K562 (cell line): ENCODE measurements at regions of chr5 and their contacts with region 1.

Region 1: GRCh38 chr5:38666668-38667498 is 110.4 kb upstream of the LIFR start:
- DNase-seq: peak; percentile 57 to 64 (median 58)
- ATAC-seq: peak; percentile 97
- H3K4me3 ChIP-seq: no peak overlapping the region
- H3K27ac ChIP-seq: no peak overlapping the region
- H3K4me1 ChIP-seq: no peaks in the 10 kb centered on the region
- H3K27me3 ChIP-seq: 0 out of 5 replicates have a peak, but pooled peaks cover 0 to 6% of the 10 kb centered on the region in 2 experiments
- CTCF ChIP-seq: peak; percentile 79 to 82 (median 80)
- EP300 ChIP-seq: no peak
- POLR2A ChIP-seq: no peak
- RAD21 ChIP-seq: peak; percentile 86 to 89

Region 2: DNA sequence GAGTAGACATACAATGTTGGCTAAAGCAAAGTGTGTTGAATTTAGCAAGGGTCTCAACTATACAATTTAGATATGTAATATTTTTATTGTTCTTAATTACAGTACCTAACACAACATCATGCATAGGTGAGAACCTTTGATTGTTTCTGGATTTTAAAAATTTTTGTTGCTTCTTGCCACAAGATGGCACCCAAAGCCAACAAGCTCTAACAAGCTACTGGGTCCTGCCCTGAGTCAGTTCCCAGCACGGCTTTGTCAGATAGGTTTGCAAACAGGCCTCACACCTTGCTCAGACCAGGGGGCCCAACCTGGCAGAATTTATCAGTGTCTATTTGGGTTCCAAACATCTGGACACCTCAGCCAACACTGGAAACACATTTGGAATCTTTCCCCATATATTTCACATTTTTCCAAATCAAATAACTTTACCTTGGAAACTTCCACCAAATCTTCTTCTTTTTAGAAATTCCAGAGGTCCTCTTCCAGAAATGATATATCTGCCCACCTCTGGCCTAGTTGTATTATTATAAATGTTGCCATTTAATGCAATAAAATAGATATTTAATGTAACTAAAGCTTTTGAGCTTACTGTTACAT is 458.0 kb before region 1 on chr5:
- CTCF ChIA-PET with region 1: interaction called, 4 read pairs
- POLR2A ChIA-PET with region 1: no interaction called
- in situ Hi-C with region 1: no loop called
- intact Hi-C with region 1: loop called (anchors 5 kb)
- DNase-seq: peak; percentile 34 to 69 (median 41)
- ATAC-seq: peak; percentile 86
- H3K4me3 ChIP-seq: no peak overlapping the region
- H3K27ac ChIP-seq: no peak overlapping the region
- H3K4me1 ChIP-seq: no peaks in the 10 kb centered on the region
- H3K27me3 ChIP-seq: no peaks in the 10 kb centered on the region
- CTCF ChIP-seq: peak; percentile 64 to 83 (median 70)
- EP300 ChIP-seq: no peak
- POLR2A ChIP-seq: no peak
- RAD21 ChIP-seq: peak; percentile 72 to 81

Region 3: DNA sequence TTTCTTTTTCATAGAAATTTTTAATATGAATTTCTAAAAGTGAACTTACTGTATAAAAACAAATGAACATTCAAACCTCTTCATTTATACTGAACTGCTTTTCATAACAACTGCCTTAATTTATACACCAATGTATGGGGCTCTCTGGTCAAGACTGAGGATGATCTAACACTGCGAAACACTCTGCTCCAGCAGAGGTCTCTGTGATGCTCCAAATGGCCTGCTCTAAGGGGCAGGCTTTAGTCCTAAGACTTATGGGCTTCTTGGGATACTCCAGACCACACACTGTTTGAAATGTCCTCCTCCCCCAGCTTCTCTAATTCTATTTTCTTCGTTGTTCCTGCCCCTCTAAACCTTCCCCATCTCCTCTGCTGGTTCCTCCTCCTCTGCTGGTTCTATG is 168.9 kb before region 1 on chr5:
- CTCF ChIA-PET with region 1: no interaction called
- POLR2A ChIA-PET with region 1: no interaction called
- in situ Hi-C with region 1: no loop called
- intact Hi-C with region 1: loop called (anchors 2 kb)
- DNase-seq: peak in 1 of 4 experiments; percentile 30
- ATAC-seq: peak; percentile 90
- H3K4me3 ChIP-seq: no peak overlapping the region
- H3K27ac ChIP-seq: no peak overlapping the region
- H3K4me1 ChIP-seq: no peaks in the 10 kb centered on the region
- H3K27me3 ChIP-seq: peaks cover 0 to 4% of the 10 kb centered on the region in 2 experiments; a peak in 2 of 5 replicates
- CTCF ChIP-seq: peak; percentile 22 to 47 (median 41); a peak in 4 of 6 replicates
- EP300 ChIP-seq: no peak
- POLR2A ChIP-seq: no peak
- RAD21 ChIP-seq: peak; percentile 12 to 62; a peak in 2 of 4 replicates

Region 4: GRCh38 chr5:38551030-38552017 is 115.6 kb before region 1 on chr5:
- CTCF ChIA-PET with region 1: interaction called, 3 read pairs
- POLR2A ChIA-PET with region 1: no interaction called
- in situ Hi-C with region 1: no loop called
- intact Hi-C with region 1: loop called (anchors 2 kb)
- DNase-seq: peak; percentile 17 to 37 (median 22)
- ATAC-seq: peak; percentile 79
- H3K4me3 ChIP-seq: no peak overlapping the region
- H3K27ac ChIP-seq: no peak overlapping the region
- H3K4me1 ChIP-seq: peaks cover 0 to 6% of the 10 kb centered on the region in 2 experiments; a peak in 3 of 5 replicates
- H3K27me3 ChIP-seq: peaks cover 0 to 5% of the 10 kb centered on the region in 2 experiments; a peak in 2 of 5 replicates
- CTCF ChIP-seq: peak; percentile 65 to 68 (median 68)
- EP300 ChIP-seq: no peak
- POLR2A ChIP-seq: no peak
- RAD21 ChIP-seq: peak; percentile 49 to 69

Region 5: GRCh38 chr5:38591523-38591849 is 75.4 kb before region 1 on chr5:
- CTCF ChIA-PET with region 1: no interaction called
- POLR2A ChIA-PET with region 1: no interaction called
- in situ Hi-C with region 1: no loop called
- intact Hi-C with region 1: no loop called
- DNase-seq: no peak
- ATAC-seq: no peak
- H3K4me3 ChIP-seq: no peak overlapping the region
- H3K27ac ChIP-seq: no peak overlapping the region
- H3K4me1 ChIP-seq: no peaks in the 10 kb centered on the region
- H3K27me3 ChIP-seq: peaks cover 0 to 3% of the 10 kb centered on the region in 2 experiments; a peak in 2 of 5 replicates
- CTCF ChIP-seq: no peak
- EP300 ChIP-seq: no peak
- POLR2A ChIP-seq: no peak
- RAD21 ChIP-seq: no peak

Region 6: GRCh38 chr5:38905516-38905915 is 238.6 kb after region 1 on chr5:
- CTCF ChIA-PET with region 1: no interaction called
- POLR2A ChIA-PET with region 1: no interaction called
- in situ Hi-C with region 1: no loop called
- intact Hi-C with region 1: no loop called
- DNase-seq: no peak
- ATAC-seq: no peak
- H3K4me3 ChIP-seq: no peak overlapping the region
- H3K27ac ChIP-seq: no peak overlapping the region
- H3K4me1 ChIP-seq: no peaks in the 10 kb centered on the region
- H3K27me3 ChIP-seq: 0 out of 5 replicates have a peak, but pooled peaks cover 2 to 5% of the 10 kb centered on the region in 2 experiments
- CTCF ChIP-seq: no peak
- EP300 ChIP-seq: no peak
- POLR2A ChIP-seq: no peak
- RAD21 ChIP-seq: no peak

Region 7: GRCh38 chr5:39616131-39616530 is 949.2 kb after region 1 on chr5:
- CTCF ChIA-PET with region 1: no interaction called
- POLR2A ChIA-PET with region 1: no interaction called
- in situ Hi-C with region 1: no loop called
- intact Hi-C with region 1: no loop called
- DNase-seq: no peak
- ATAC-seq: no peak
- H3K4me3 ChIP-seq: no peak overlapping the region
- H3K27ac ChIP-seq: no peak overlapping the region
- H3K4me1 ChIP-seq: no peaks in the 10 kb centered on the region
- H3K27me3 ChIP-seq: no peaks in the 10 kb centered on the region; a peak in 1 of 5 replicates
- CTCF ChIP-seq: no peak
- EP300 ChIP-seq: no peak
- POLR2A ChIP-seq: no peak
- RAD21 ChIP-seq: no peak